ENCODE measurements at regions of chr10 and their contacts with region 1.

Region 1: GRCh38 chr10:71850637-71851464 is at the start of gene PSAP:
- DNase-seq: peak; percentile 95
- ATAC-seq: peak; percentile 94
- H3K4me3 ChIP-seq: peak within 1 kb of the TSS; percentile 74 to 84 (median 81)
- H3K27ac ChIP-seq: peak within 1 kb of the TSS; percentile 76
- H3K4me1 ChIP-seq: peaks cover 53% of the 10 kb centered on the region
- H3K27me3 ChIP-seq: peaks cover 3% of the 10 kb centered on the region in 2 experiments; a peak in 2 of 5 replicates
- CTCF ChIP-seq: no peak
- EP300 ChIP-seq: no peak
- POLR2A ChIP-seq: peak; percentile 98 to 99
- RAD21 ChIP-seq: peak; percentile 58; the same call in 1 of the 2 replicates
- total RNA-seq, gene PSAP: 148 and 323 TPM in 2 replicates

Region 2: GRCh38 chr10:71531485-71532446 is 319.1 kb before region 1 on chr10:
- CTCF ChIA-PET with region 1: no interaction called
- POLR2A ChIA-PET with region 1: no interaction called
- in situ Hi-C with region 1: no loop called
- intact Hi-C with region 1: no loop called
- DNase-seq: no peak
- ATAC-seq: no peak
- H3K4me3 ChIP-seq: no peak overlapping the region
- H3K27ac ChIP-seq: no peak overlapping the region
- H3K4me1 ChIP-seq: no peaks in the 10 kb centered on the region
- H3K27me3 ChIP-seq: peaks cover 4 to 34% of the 10 kb centered on the region in 2 experiments; a peak in 3 of 5 replicates
- CTCF ChIP-seq: no peak
- EP300 ChIP-seq: no peak
- POLR2A ChIP-seq: no peak
- RAD21 ChIP-seq: no peak

Region 3: DNA sequence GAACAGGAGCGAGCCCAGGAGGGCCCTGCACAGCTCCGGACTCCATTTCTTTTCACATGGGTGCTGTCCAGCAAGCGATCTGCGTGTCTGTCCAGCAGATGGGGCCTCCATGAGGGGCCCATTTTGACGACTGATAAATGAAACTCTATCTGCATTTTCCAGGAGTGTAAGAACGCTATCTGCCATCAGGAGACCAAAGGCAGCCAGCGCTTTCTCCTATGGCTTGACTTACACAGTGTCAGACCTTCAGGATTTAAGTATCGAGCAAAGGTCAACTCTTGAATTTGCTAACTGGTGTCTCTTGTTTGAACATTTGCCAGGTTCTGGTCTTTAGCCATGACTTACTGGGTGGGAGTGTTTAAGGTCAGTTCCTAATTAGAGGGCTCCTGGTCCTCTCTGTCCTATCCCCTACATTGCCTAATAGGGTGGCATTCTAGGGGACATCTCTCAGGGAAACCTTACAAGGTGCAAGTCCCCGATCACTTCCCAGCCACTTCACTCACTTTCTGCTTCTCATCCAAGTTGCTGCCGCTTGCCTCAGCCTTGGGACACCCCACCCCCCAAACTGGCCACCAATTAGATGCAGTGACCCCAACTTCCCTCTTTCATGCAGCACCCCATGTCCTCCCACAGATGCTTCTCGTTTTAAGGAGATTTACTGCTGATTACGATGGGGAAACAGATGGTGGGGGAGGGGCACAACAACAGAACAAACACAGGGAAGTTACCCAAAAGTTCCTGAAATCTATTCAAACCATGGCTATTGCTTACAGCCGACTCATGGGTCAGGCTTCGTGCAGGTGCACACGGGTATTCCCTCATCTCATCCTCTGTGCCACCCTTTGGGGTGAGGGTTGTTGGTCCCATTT is 97.5 kb before region 1 on chr10:
- CTCF ChIA-PET with region 1: no interaction called
- POLR2A ChIA-PET with region 1: no interaction called
- in situ Hi-C with region 1: no loop called
- intact Hi-C with region 1: no loop called
- DNase-seq: peak; percentile 81
- ATAC-seq: peak; percentile 86
- H3K4me3 ChIP-seq: peak overlapping the region in 1 of 3 experiments; percentile 11; a peak in 1 of 6 replicates
- H3K27ac ChIP-seq: no peak overlapping the region
- H3K4me1 ChIP-seq: peaks cover 64% of the 10 kb centered on the region
- H3K27me3 ChIP-seq: peaks cover 3 to 35% of the 10 kb centered on the region in 2 experiments; a peak in 3 of 5 replicates
- CTCF ChIP-seq: no peak
- EP300 ChIP-seq: no peak; a peak in 1 of 4 replicates
- POLR2A ChIP-seq: no peak
- RAD21 ChIP-seq: no peak

Region 4: GRCh38 chr10:71801361-71801760 is 49.5 kb before region 1 on chr10:
- CTCF ChIA-PET with region 1: no interaction called
- POLR2A ChIA-PET with region 1: no interaction called
- in situ Hi-C with region 1: no loop called
- intact Hi-C with region 1: no loop called
- DNase-seq: no peak
- ATAC-seq: no peak
- H3K4me3 ChIP-seq: no peak overlapping the region
- H3K27ac ChIP-seq: no peak overlapping the region
- H3K4me1 ChIP-seq: peaks cover 16% of the 10 kb centered on the region
- H3K27me3 ChIP-seq: peaks cover 5 to 14% of the 10 kb centered on the region in 2 experiments; a peak in 4 of 5 replicates
- CTCF ChIP-seq: no peak
- EP300 ChIP-seq: no peak
- POLR2A ChIP-seq: no peak
- RAD21 ChIP-seq: no peak

Region 5: DNA sequence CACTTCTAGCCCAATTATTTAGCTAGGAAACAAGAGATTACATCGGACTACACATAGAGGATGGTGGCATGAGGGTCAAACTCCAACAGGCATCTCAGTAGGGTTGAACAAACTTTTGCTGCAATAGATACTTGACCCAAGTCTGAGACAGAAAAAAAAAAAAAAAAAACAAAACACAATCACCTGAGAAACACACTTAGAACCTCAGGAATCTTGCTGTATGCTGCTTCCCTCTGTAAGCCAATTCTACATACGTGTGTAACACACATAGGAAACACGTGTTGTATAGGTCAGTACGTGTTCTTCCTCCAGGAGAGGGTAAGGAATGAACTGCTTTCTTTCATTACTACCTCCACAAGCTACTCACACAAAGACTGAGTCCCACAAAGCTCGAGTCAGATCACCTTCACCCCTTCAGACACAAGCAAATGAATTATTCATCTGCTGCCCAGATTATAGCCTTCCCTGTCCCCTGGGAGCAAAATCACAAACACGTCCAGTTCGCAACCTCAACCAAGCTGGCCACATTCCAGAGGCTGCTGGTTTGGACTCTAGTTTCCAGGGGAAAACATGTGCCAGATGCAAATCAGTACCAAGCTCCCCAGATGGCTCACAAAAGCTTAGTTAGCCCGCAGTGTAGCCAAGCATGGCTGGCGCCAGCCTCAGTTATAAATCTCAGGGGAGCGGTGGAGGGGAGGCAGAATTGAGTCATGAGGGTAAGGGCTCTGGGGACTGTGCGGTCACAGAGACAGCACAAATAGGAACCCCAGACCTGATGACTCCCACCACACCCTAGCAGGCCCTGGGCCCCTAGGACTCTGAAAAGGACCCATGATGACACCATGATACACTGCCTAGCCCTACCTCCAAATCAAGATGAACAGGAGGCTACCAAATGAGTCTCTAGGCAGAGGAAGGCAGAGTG is 14.9 kb before region 1 on chr10:
- CTCF ChIA-PET with region 1: no interaction called
- POLR2A ChIA-PET with region 1: interaction called, 23 read pairs
- in situ Hi-C with region 1: no loop called
- intact Hi-C with region 1: no loop called
- DNase-seq: peak; percentile 42
- ATAC-seq: peak; percentile 49
- H3K4me3 ChIP-seq: no peak overlapping the region
- H3K27ac ChIP-seq: peak overlapping the region; percentile 34
- H3K4me1 ChIP-seq: peaks cover 36% of the 10 kb centered on the region
- H3K27me3 ChIP-seq: no peaks in the 10 kb centered on the region
- CTCF ChIP-seq: no peak
- EP300 ChIP-seq: no peak
- POLR2A ChIP-seq: no peak
- RAD21 ChIP-seq: no peak

Region 6: GRCh38 chr10:73803680-73804286 is 1952.9 kb after region 1 on chr10:
- CTCF ChIA-PET with region 1: no interaction called
- POLR2A ChIA-PET with region 1: no interaction called
- in situ Hi-C with region 1: no loop called
- intact Hi-C with region 1: no loop called
- DNase-seq: no peak
- ATAC-seq: no peak
- H3K4me3 ChIP-seq: no peak overlapping the region
- H3K27ac ChIP-seq: no peak overlapping the region
- H3K4me1 ChIP-seq: peaks cover 2% of the 10 kb centered on the region
- H3K27me3 ChIP-seq: no peaks in the 10 kb centered on the region
- CTCF ChIP-seq: no peak
- EP300 ChIP-seq: no peak
- POLR2A ChIP-seq: no peak
- RAD21 ChIP-seq: no peak